ENCODE measurements at regions of chr11 and their contacts with region 1.

Region 1: GRCh38 chr11:3849297-3849874 is 6.1 kb upstream of the STIM1 start:
- DNase-seq: no peak
- ATAC-seq: peak; percentile 68 to 71

Region 2: GRCh38 chr11:4072668-4073285 is 223.4 kb after region 1 on chr11:
- intact Hi-C with region 1: loop called (anchors 2 kb)
- DNase-seq: no peak
- ATAC-seq: peak; percentile 90 to 91

Region 3: GRCh38 chr11:4146070-4146771 is 296.8 kb after region 1 on chr11:
- intact Hi-C with region 1: no loop called
- DNase-seq: no peak
- ATAC-seq: no peak

Measured in left cardiac atrium (tissue), 4 donors.